CD4-positive, alpha-beta T cell (primary cell): ENCODE measurements at regions of chr19 and their contacts with region 1.

Region 1: GRCh38 chr19:36973021-36973843 is 57.1 kb downstream of the ZNF568 start:
- DNase-seq: peak; percentile 48 to 91 (median 72)
- ATAC-seq: peak; percentile 98
- H3K4me3 ChIP-seq: peak overlapping the region; percentile 83
- H3K4me3 Mint-ChIP-seq: peak overlapping the region; percentile 92
- H3K27ac ChIP-seq: peak overlapping the region; percentile 57 to 78
- H3K27ac Mint-ChIP-seq: peak overlapping the region; percentile 94
- H3K4me1 ChIP-seq: peaks cover 17% of the 10 kb centered on the region
- H3K4me1 Mint-ChIP-seq: peaks cover 16% of the 10 kb centered on the region
- H3K27me3 ChIP-seq: no peaks in the 10 kb centered on the region
- H3K27me3 Mint-ChIP-seq: no peaks in the 10 kb centered on the region
- CTCF ChIP-seq: peak; percentile 97

Region 2: GRCh38 chr19:36915992-36916830 is 57.0 kb before region 1 on chr19 and contains the starts of genes ZNF568 and ZNF829:
- CTCF ChIA-PET with region 1: interaction called, 4 read pairs
- POLR2A ChIA-PET with region 1: interaction called, 6 read pairs
- intact Hi-C with region 1: loop called in 1 of 2 experiments (anchors 2 kb)
- DNase-seq: peak; percentile 83 to 97 (median 90)
- ATAC-seq: peak; percentile 97
- H3K4me3 ChIP-seq: peak within 1 kb of the TSS; percentile 92
- H3K4me3 Mint-ChIP-seq: peak within 1 kb of the TSS; percentile 90
- H3K27ac ChIP-seq: peak within 1 kb of the TSS; percentile 89 to 97
- H3K27ac Mint-ChIP-seq: peak within 1 kb of the TSS; percentile 88
- H3K4me1 ChIP-seq: peaks cover 19% of the 10 kb centered on the region
- H3K4me1 Mint-ChIP-seq: peaks cover 44% of the 10 kb centered on the region
- H3K27me3 ChIP-seq: no peaks in the 10 kb centered on the region
- H3K27me3 Mint-ChIP-seq: no peaks in the 10 kb centered on the region
- CTCF ChIP-seq: peak; percentile 74
- total RNA-seq, gene ZNF568: 3.0 to 4.2 TPM
- total RNA-seq, gene ZNF829: 3.8 to 4.4 TPM

Region 3: GRCh38 chr19:36931684-36932083 is 41.5 kb before region 1 on chr19:
- CTCF ChIA-PET with region 1: no interaction called
- POLR2A ChIA-PET with region 1: no interaction called
- intact Hi-C with region 1: loop called in 1 of 2 experiments (anchors 1 kb)
- DNase-seq: no peak
- ATAC-seq: no peak
- H3K4me3 ChIP-seq: no peak overlapping the region
- H3K4me3 Mint-ChIP-seq: no peak overlapping the region
- H3K27ac ChIP-seq: no peak overlapping the region
- H3K27ac Mint-ChIP-seq: no peak overlapping the region
- H3K4me1 ChIP-seq: no peaks in the 10 kb centered on the region
- H3K4me1 Mint-ChIP-seq: no peaks in the 10 kb centered on the region
- H3K27me3 ChIP-seq: no peaks in the 10 kb centered on the region
- H3K27me3 Mint-ChIP-seq: no peaks in the 10 kb centered on the region
- CTCF ChIP-seq: no peak

Region 4: DNA sequence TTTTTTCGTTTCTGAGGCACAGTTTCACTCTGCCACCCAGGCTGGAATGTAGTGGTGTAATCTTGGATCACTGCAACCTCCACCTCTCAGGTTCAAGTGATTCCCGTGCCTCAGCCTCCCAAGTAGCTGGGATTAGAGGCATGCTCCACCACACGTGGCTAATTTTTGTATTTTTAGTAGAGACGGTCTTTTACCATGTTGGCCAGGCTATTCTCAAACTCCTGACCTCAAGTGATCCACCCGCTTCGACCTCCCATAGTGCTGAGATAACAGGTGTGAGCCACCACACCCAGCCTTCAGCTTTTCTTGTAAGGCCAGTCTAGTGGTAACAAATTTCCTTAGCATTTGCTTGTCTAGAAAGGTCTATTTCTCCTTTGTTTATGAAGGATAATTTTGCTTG is 10.9 kb before region 1 on chr19:
- CTCF ChIA-PET with region 1: no interaction called
- POLR2A ChIA-PET with region 1: no interaction called
- intact Hi-C with region 1: no loop called
- DNase-seq: no peak
- ATAC-seq: no peak
- H3K4me3 ChIP-seq: no peak overlapping the region
- H3K4me3 Mint-ChIP-seq: no peak overlapping the region
- H3K27ac ChIP-seq: no peak overlapping the region
- H3K27ac Mint-ChIP-seq: no peak overlapping the region
- H3K4me1 ChIP-seq: no peaks in the 10 kb centered on the region
- H3K4me1 Mint-ChIP-seq: no peaks in the 10 kb centered on the region
- H3K27me3 ChIP-seq: no peaks in the 10 kb centered on the region
- H3K27me3 Mint-ChIP-seq: no peaks in the 10 kb centered on the region
- CTCF ChIP-seq: no peak

Region 5: GRCh38 chr19:37172368-37173366 is 199.4 kb after region 1 on chr19 and contains the start of gene ZNF585A:
- CTCF ChIA-PET with region 1: interaction called, 7 read pairs
- POLR2A ChIA-PET with region 1: no interaction called
- intact Hi-C with region 1: loop called in 1 of 2 experiments (anchors 5 kb)
- DNase-seq: peak; percentile 83 to 98 (median 89)
- ATAC-seq: peak; percentile 99
- H3K4me3 ChIP-seq: peak within 1 kb of the TSS; percentile 77
- H3K4me3 Mint-ChIP-seq: no peak within 1 kb of the TSS
- H3K27ac ChIP-seq: peak within 1 kb of the TSS; percentile 63 to 73
- H3K27ac Mint-ChIP-seq: no peak within 1 kb of the TSS
- H3K4me1 ChIP-seq: peaks cover 11% of the 10 kb centered on the region
- H3K4me1 Mint-ChIP-seq: no peaks in the 10 kb centered on the region
- H3K27me3 ChIP-seq: no peaks in the 10 kb centered on the region
- H3K27me3 Mint-ChIP-seq: no peaks in the 10 kb centered on the region
- CTCF ChIP-seq: no peak
- total RNA-seq, gene ZNF585A: 4.5 to 4.6 TPM

Region 6: DNA sequence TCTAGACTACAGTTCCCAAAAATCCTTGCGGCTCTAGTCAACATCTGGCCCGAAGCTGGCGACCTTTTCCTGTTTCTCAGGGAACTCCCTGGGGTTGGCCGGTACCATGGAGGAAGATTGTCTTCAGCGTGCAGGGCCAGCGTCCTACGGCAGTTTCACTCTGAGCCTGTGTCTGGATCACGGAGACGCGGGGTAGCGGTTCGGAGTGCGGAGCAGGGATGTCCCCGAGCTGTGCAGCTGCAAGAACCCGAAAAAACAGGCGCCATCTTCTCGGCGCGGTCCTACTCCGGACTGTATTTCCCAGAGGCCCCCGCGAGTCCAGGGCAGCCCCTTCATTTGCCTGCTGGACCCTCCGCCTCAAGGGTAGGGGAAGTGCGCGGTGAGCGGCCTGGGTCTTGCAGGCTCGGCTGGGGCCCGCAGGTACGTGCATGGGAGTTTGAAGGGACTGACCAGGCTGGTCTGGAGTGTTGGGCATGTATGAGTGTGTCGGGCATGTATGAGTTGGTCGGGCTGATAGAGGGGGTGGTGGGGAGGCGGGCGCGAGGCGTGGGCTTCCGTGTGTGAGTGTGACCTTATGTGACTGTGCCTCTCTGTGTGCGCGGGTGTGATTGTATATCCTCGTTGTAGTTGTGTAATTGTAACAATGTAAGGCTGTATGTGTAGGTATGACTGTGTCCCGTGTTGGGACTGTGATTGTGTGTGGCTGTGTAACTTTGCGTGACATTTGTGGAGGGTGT is 244.8 kb after region 1 on chr19 and contains the start of gene ZNF383:
- CTCF ChIA-PET with region 1: interaction called, 7 read pairs
- POLR2A ChIA-PET with region 1: interaction called, 7 read pairs
- intact Hi-C with region 1: loop called (anchors 5 kb)
- DNase-seq: peak; percentile 66 to 90 (median 78)
- ATAC-seq: peak; percentile 81
- H3K4me3 ChIP-seq: peak within 1 kb of the TSS; percentile 94
- H3K4me3 Mint-ChIP-seq: peak within 1 kb of the TSS; percentile 93
- H3K27ac ChIP-seq: peak within 1 kb of the TSS; percentile 81 to 90
- H3K27ac Mint-ChIP-seq: peak within 1 kb of the TSS; percentile 89
- H3K4me1 ChIP-seq: peaks cover 14% of the 10 kb centered on the region
- H3K4me1 Mint-ChIP-seq: peaks cover 42% of the 10 kb centered on the region
- H3K27me3 ChIP-seq: no peaks in the 10 kb centered on the region
- H3K27me3 Mint-ChIP-seq: no peaks in the 10 kb centered on the region
- CTCF ChIP-seq: no peak
- total RNA-seq, gene ZNF383: 13.1 to 15.7 TPM

Region 7: DNA sequence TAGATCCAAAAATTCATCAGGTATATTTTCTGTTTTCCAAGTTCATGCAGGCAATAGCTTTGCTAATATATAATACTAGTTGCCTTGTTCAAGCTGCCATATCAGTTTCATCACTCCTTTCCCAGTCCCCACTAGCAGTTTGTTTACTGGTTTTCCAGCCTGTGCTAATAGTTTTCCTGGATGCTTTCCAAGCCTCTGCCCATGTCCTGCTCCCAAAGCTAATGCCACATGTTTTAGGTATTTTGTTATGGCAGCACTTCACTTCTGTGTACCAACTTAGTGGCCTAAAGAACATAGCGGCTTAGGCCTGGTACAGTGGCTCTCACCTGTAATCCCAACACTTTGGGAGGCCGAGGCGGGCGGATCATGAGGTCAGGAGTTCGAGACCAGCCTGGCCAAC is 369.5 kb after region 1 on chr19:
- CTCF ChIA-PET with region 1: no interaction called
- POLR2A ChIA-PET with region 1: no interaction called
- intact Hi-C with region 1: no loop called
- DNase-seq: no peak
- ATAC-seq: no peak
- H3K4me3 ChIP-seq: no peak overlapping the region
- H3K4me3 Mint-ChIP-seq: no peak overlapping the region
- H3K27ac ChIP-seq: no peak overlapping the region
- H3K27ac Mint-ChIP-seq: no peak overlapping the region
- H3K4me1 ChIP-seq: no peaks in the 10 kb centered on the region
- H3K4me1 Mint-ChIP-seq: peaks cover 10% of the 10 kb centered on the region
- H3K27me3 ChIP-seq: no peaks in the 10 kb centered on the region
- H3K27me3 Mint-ChIP-seq: no peaks in the 10 kb centered on the region
- CTCF ChIP-seq: no peak